ENCODE measurements at regions of chr7 and their contacts with region 1.

Region 1: DNA sequence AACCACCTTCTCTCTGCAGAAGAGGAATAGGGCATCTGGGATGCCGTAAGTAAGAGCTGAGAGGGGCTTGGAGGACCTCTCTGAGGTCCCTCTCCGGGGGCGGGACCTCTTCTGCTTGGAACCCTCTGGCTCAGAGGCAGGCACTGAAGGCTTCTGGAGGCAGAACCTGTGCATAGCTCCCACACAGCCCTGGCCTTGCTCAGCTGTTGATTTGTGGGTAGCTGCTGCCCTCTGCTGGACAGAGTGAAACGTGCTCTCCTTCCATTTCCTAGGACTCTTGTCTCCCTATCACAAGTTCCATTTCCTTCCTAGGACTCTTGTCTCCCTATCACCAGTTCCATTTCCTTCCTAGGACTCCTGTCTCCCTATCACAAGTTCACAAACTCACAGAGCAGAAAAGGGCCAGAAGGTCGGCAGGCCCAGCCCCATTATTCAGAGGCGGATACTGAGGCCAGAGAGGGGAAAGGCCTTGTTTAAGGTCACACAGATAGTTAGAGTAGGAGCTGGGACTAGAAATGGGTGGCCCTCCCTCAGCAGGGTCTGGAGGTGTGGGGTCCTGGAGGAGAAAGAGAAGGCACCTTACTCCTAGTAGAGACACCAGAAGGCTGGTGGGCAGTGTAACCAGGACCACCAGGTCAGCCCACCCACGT is 30.3 kb upstream of the GARS1 start:
- DNase-seq: peak; percentile 70 to 81
- ATAC-seq: peak; percentile 97

Region 2: GRCh38 chr7:30164567-30164966 is 399.8 kb before region 1 on chr7:
- intact Hi-C with region 1: loop called in 1 of 2 experiments (anchors 10 kb)
- DNase-seq: no peak
- ATAC-seq: peak; percentile 62

Region 3: DNA sequence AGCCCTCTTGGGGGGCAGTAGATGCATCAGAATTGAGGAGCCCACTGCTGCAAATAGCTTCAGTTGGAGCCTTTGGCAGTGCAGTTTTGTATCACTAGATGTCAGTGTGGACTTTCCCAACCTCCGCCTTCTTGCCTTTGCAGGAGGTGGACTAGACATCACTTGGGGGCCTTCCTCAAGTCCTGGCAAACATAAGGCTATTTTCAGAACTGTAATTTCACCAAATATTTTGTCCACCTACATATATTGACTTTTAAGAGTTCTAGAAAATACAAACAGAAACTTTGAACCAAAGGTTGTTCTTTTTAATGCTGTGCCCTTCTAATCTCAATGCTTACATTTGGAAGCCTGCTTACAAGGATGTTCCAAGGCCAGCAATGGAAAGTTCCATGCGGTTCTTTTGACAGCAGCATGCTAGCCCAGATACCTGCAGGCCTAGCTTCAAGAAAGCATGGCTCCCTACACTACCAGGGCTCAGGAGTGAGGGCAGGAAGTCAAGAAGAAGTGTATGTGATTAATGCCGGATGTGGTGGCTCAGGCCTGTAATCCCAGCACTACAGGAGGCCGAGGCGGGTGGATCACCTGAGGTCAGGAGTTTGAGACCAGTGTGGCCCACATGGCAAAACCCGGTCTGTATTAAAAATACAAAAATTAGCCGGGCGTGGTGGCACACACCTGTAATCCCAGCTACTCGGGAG is 288.0 kb before region 1 on chr7:
- intact Hi-C with region 1: loop called in 1 of 2 experiments (anchors 10 kb)
- DNase-seq: peak in 1 of 2 donors; percentile 34
- ATAC-seq: peak; percentile 70

Region 4: GRCh38 chr7:30659312-30659711 is 94.9 kb after region 1 on chr7:
- intact Hi-C with region 1: no loop called
- DNase-seq: no peak
- ATAC-seq: no peak